ENCODE measurements at regions of chr19 and their contacts with region 1.

Region 1: DNA sequence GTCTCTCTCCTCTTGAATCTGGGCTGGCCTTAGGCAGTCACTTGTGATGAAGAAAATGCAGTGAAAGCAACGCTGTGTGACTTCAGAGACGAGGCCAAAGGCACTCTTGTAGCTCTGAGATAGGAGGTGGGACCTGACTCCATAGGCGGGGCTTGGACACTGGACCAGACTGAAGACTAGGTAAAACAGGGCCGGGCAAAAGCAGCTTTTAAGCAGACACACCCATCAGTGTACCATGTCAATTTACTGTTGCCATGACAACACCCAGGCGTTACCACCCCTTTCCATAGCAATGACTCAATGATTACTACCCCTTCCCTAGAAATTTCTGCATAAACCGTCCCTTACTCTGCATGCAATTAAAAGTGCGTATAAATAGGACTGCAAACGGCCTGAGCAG is 6.6 kb upstream of the EID2 start:
- DNase-seq: no peak
- ATAC-seq: no peak
- H3K4me3 ChIP-seq: no peak overlapping the region
- H3K4me3 Mint-ChIP-seq: peak overlapping the region in 5 of 10 donors; percentile 15 to 55 (median 43)
- H3K27ac ChIP-seq: no peak overlapping the region
- H3K27ac Mint-ChIP-seq: peak overlapping the region in 8 of 9 donors; percentile 28 to 83 (median 70)
- H3K4me1 ChIP-seq: peaks cover 5 to 35% of the 10 kb centered on the region in 2 donors
- H3K4me1 Mint-ChIP-seq: peaks cover 24 to 58% (median 48%) of the 10 kb centered on the region in 7 donors
- H3K27me3 ChIP-seq: no peaks in the 10 kb centered on the region
- H3K27me3 Mint-ChIP-seq: peaks cover 0 to 4% (median 0%) of the 10 kb centered on the region in 5 donors

Region 2: DNA sequence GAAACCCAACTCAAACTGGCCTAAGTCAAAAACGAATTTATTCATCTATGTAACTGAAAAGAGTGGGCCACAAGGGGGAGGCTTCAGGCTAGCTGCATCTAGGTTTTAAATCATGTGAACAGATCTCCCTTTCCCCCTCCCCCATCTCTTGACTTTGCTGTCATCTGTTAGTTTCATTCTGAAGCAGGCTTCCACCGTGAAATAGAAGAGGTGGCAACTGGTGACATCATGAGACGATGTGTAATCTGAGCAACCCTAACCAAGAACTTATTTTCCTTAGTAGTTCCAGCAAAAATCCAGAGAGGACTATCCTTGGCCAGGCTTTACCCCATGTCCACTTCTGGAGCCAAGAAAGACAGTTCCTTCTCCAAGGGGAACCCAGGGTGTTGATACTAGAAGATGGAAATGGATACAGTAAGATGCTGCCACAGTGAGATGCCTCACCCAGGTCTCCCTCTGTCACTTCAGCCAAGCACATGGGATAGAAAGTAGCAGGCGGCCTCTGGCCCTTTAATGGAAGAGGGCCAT is 195.0 kb before region 1 on chr19:
- CTCF ChIA-PET with region 1: no interaction called
- POLR2A ChIA-PET with region 1: no interaction called
- intact Hi-C with region 1: no loop called
- DNase-seq: peak in 4 of 9 donors; percentile 15 to 40 (median 25)
- ATAC-seq: peak; percentile 77
- H3K4me3 ChIP-seq: no peak overlapping the region
- H3K4me3 Mint-ChIP-seq: peak overlapping the region in 1 of 10 donors; percentile 24
- H3K27ac ChIP-seq: no peak overlapping the region
- H3K27ac Mint-ChIP-seq: peak overlapping the region in 2 of 9 donors; percentile 16 to 82
- H3K4me1 ChIP-seq: no peaks in the 10 kb centered on the region
- H3K4me1 Mint-ChIP-seq: peaks cover 22 to 50% (median 34%) of the 10 kb centered on the region in 7 donors
- H3K27me3 ChIP-seq: no peaks in the 10 kb centered on the region
- H3K27me3 Mint-ChIP-seq: no peaks in the 10 kb centered on the region

Region 3: GRCh38 chr19:39631178-39631577 is 84.6 kb after region 1 on chr19:
- CTCF ChIA-PET with region 1: interaction called, 7 read pairs
- POLR2A ChIA-PET with region 1: no interaction called
- intact Hi-C with region 1: loop called in 1 of 2 experiments (anchors 1 kb)
- DNase-seq: no peak
- ATAC-seq: no peak
- H3K4me3 ChIP-seq: no peak overlapping the region
- H3K4me3 Mint-ChIP-seq: no peak overlapping the region
- H3K27ac ChIP-seq: no peak overlapping the region
- H3K27ac Mint-ChIP-seq: no peak overlapping the region
- H3K4me1 ChIP-seq: no peaks in the 10 kb centered on the region
- H3K4me1 Mint-ChIP-seq: peaks cover 0 to 2% (median 0%) of the 10 kb centered on the region in 7 donors
- H3K27me3 ChIP-seq: peaks cover 0 to 3% of the 10 kb centered on the region in 2 donors
- H3K27me3 Mint-ChIP-seq: peaks cover 12 to 26% (median 20%) of the 10 kb centered on the region in 5 donors

Region 4: DNA sequence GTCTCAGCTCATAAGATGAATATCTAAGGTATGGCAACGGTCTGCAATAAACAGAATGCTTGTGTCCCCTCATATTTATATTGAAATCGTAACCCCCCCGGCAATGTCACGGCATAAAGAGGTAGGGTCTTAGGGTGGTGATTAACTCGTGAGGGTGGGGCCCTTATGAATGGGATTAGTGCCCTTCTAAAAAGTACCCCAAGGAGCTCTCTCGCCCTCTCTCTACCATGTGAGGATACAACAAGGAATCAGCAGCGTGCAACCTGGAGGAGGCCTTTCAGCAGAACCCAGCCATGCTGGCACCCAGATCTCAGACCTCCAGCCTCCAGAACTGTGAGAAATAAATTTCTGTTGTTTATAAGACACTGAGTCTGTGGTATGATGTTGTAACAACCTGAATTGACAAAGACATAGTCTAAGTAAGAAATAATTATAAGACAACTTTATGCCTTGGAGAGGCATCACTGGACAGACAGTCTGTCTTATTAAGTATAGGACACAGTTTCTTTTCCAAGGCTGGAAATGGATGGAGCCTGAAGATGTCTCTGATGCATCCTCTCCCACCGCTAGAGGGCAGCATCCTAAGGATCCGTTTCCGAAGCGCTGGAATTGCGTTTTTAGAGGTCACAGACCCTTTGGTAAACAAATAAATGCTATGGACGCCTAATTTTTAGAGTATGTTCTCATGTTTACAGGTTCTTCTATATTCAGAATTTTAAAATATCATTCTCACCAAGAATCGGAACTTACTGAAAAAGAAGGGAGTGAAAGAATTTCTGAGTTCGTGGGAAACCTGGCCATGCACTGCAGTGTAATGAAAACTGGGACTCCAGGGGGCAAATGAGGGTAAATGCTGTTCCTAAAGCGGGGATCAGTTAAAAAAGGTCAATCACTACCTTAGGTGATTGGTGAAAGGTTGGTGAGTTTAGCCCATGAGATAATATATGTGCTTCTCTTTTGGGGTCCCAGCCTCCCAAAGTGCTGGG is 218.8 kb after region 1 on chr19:
- CTCF ChIA-PET with region 1: interaction called, 4 read pairs
- POLR2A ChIA-PET with region 1: no interaction called
- intact Hi-C with region 1: loop called (anchors 1 kb)
- DNase-seq: peak in 4 of 9 donors; percentile 4 to 33 (median 11)
- ATAC-seq: no peak
- H3K4me3 ChIP-seq: no peak overlapping the region
- H3K4me3 Mint-ChIP-seq: peak overlapping the region in 1 of 10 donors; percentile 14
- H3K27ac ChIP-seq: no peak overlapping the region
- H3K27ac Mint-ChIP-seq: peak overlapping the region in 1 of 9 donors; percentile 14
- H3K4me1 ChIP-seq: no peaks in the 10 kb centered on the region
- H3K4me1 Mint-ChIP-seq: peaks cover 0 to 4% (median 0%) of the 10 kb centered on the region in 7 donors
- H3K27me3 ChIP-seq: no peaks in the 10 kb centered on the region
- H3K27me3 Mint-ChIP-seq: peaks cover 0 to 15% (median 4%) of the 10 kb centered on the region in 5 donors

Measured in naive thymus-derived CD4-positive, alpha-beta T cell (primary cell).